ENCODE measurements at regions of chr1 and their contacts with region 1.

Region 1: DNA sequence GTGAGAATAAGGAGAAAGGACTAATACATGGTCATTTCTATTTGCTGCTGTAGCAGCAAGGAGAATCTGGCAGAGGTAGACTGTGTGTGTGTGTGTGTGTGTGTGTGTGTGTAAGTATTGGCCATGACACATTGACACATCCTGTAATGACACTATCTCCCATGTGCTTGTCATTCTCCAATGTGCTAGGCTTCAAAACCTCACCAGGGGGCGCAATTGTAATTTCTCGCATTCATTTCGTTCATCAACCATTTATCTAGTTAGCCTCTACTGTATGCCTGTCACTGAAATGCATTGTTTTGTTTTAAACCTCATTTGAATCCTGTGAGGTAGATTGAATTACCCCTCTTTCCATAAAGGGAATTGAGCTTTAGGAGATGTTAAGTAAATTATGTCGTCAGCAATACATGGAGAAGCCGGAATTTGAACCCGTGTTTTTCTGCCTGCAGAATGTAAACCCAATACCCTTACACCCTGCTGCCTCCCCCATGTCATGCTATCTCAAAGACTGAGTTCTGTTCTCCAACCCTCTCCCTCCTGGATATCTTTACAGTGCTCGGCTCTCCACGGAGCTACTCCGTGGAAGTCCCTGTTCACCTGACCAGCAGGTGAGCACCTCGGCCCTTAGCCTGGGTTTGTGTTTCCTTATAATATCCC is 100.8 kb downstream of the UCK2 start:
- DNase-seq: peak; percentile 39
- ATAC-seq: peak; percentile 55
- H3K4me3 ChIP-seq: no peak overlapping the region
- H3K27ac ChIP-seq: no peak overlapping the region
- H3K4me1 ChIP-seq: no peaks in the 10 kb centered on the region
- H3K27me3 ChIP-seq: no peaks in the 10 kb centered on the region
- CTCF ChIP-seq: peak; percentile 58 to 82 (median 72)
- POLR2A ChIP-seq: no peak
- RAD21 ChIP-seq: peak; percentile 75

Region 2: DNA sequence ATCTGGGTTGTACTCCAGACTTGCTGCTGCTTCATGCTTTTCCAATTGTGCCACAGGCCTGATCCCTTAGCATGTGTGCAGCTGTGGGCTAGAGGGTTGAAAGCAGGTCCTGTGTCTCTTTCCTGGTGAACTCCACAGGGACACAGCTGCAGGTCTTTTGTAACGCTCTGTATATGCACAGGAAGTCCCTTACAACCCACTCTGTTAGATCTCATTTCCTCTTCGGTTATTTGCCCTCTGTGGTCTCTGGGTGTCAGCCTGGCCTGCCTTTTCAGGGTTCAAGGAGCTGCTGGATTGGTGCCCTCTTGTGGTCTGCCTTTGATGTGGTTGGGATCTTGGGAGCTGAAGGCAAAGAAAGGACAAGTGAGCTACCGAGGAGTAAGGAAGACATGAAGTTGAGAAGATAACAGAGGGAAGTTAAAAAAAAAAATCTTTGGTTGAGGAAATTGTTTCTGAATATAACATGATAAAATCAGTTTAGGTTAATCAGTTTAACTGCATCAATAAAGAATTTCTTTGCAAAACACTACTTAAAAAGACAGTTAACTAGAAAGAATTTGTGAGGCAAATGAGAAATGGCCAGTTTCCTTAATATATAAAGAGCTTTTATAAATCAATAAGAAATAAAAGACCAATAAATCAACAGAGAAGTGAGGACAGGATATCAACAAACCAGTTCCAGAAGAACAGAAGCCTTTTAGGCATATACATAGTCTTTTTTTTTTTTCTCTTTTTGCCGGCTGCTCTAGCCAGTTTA is 56.7 kb before region 1 on chr1:
- CTCF ChIA-PET with region 1: no interaction called
- POLR2A ChIA-PET with region 1: no interaction called
- RAD21 ChIA-PET with region 1: no interaction called
- intact Hi-C with region 1: no loop called
- DNase-seq: peak; percentile 79
- ATAC-seq: peak; percentile 85
- H3K4me3 ChIP-seq: no peak overlapping the region
- H3K27ac ChIP-seq: no peak overlapping the region
- H3K4me1 ChIP-seq: peaks cover 11 to 15% of the 10 kb centered on the region in 2 experiments
- H3K27me3 ChIP-seq: no peaks in the 10 kb centered on the region
- CTCF ChIP-seq: peak; percentile 57 to 66 (median 61); a peak in 5 of 6 replicates
- POLR2A ChIP-seq: no peak
- RAD21 ChIP-seq: peak; percentile 63

Region 3: GRCh38 chr1:166166695-166167571 is 238.7 kb after region 1 on chr1 and contains the start of gene FAM78B:
- CTCF ChIA-PET with region 1: no interaction called
- POLR2A ChIA-PET with region 1: no interaction called
- RAD21 ChIA-PET with region 1: no interaction called
- intact Hi-C with region 1: loop called (anchors 10 kb)
- DNase-seq: peak; percentile 42
- ATAC-seq: peak; percentile 83
- H3K4me3 ChIP-seq: peak within 1 kb of the TSS; percentile 41 to 54
- H3K27ac ChIP-seq: peak within 1 kb of the TSS; percentile 32; the same call in 1 of the 2 replicates
- H3K4me1 ChIP-seq: peaks cover 0 to 31% of the 10 kb centered on the region in 2 experiments; a peak in 3 of 4 replicates
- H3K27me3 ChIP-seq: no peaks in the 10 kb centered on the region
- CTCF ChIP-seq: 0 out of 6 replicates have a peak, but pooled peaks of 1 of the 3 experiments have one; percentile 2
- POLR2A ChIP-seq: no peak
- RAD21 ChIP-seq: no peak
- total RNA-seq, gene FAM78B: 1.4 TPM

Region 4: DNA sequence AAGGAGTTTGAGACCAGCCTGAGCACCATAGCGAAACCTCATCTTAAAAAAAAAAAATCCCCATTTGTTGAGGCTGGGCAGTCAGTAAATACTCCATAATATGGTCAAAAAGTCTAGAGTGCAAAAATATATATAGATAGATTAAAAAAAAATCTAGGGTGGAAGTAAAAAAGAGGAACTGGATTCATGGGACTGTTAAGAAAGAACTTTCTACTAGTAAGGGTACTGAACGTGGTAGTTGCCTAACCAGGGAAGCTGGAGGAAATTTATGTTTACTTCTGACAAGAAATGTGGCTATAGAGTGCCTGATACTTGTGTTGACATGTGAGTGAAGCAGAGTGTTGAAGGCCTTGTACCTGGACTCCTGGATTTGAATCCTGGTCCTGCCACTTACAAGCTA is 504.5 kb after region 1 on chr1:
- CTCF ChIA-PET with region 1: interaction called, 7 read pairs
- POLR2A ChIA-PET with region 1: no interaction called
- RAD21 ChIA-PET with region 1: no interaction called
- intact Hi-C with region 1: loop called (anchors 1 kb)
- DNase-seq: no peak
- ATAC-seq: no peak
- H3K4me3 ChIP-seq: no peak overlapping the region
- H3K27ac ChIP-seq: no peak overlapping the region
- H3K4me1 ChIP-seq: no peaks in the 10 kb centered on the region
- H3K27me3 ChIP-seq: no peaks in the 10 kb centered on the region
- CTCF ChIP-seq: no peak
- POLR2A ChIP-seq: no peak
- RAD21 ChIP-seq: no peak

Region 5: DNA sequence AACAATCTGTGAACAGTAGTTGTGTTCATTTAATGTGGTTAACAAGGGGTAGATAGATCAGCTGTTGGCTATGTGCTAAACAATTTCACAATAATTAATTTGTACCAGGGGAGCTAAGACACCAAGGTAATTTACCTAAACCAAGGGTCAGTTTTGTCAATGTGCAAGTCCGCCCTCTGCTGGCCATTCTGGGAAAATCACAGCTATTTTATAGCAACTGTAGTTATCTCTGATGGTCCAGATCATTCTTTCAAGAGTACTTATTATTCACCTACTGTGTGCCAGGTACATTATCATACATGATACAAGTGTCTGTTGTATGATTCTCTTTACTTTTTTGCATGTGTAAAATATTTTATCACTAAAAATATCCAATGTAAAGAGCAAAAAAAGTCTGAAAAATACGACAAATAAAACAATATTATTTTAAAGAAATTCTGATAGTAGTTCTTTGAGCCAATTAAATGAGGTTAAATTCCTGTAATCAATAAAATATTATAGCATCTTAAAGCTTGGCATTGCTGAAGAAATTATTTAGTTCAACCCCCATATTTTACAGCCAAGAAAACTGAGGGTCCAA is 550.9 kb after region 1 on chr1:
- CTCF ChIA-PET with region 1: interaction called, 38 read pairs
- POLR2A ChIA-PET with region 1: no interaction called
- RAD21 ChIA-PET with region 1: interaction called in 1 of 2 experiments, 3 read pairs
- intact Hi-C with region 1: loop called (anchors 1 kb)
- DNase-seq: peak; percentile 21
- ATAC-seq: peak; percentile 67
- H3K4me3 ChIP-seq: no peak overlapping the region
- H3K27ac ChIP-seq: no peak overlapping the region
- H3K4me1 ChIP-seq: no peaks in the 10 kb centered on the region
- H3K27me3 ChIP-seq: peaks cover 18% of the 10 kb centered on the region
- CTCF ChIP-seq: peak; percentile 32 to 86 (median 56); a peak in 5 of 6 replicates
- POLR2A ChIP-seq: no peak
- RAD21 ChIP-seq: peak; percentile 57

Region 6: DNA sequence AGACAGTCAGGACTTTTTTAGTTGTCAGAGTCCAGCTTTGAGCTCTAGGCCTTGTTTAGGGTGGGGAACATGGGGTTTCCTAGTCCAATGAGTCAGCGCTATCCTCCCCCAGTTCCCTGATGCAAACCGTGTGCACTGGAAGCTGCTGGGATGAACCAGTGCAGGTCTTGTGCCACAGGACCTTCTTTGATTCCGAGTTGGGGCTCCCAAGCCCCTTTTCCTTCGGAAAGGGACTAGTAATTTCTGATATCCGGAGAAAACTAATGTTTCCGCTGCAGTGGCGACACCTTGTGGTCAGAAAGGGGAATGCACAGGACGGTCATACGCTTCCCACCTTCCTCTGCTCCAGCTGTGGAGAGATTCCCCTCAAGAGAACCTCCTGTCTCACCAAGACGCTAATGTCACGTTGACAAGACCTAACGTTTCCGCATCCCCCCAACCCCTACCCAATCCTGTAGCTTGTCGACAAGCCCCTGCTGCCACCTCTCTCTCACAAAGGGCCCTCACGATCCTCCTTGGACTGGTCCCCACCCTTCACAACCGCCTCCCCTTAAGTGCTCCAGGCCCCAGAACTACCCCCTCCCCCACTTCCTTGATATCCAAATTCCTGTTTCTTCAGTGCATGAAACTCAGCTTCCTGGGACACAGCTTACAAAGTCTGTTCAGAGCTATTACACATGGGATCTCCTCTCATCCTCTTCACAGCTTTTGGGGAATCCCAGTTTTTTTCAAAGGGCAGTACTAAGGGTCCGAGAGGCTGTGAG is 1131.0 kb after region 1 on chr1:
- CTCF ChIA-PET with region 1: interaction called, 17 read pairs
- POLR2A ChIA-PET with region 1: no interaction called
- RAD21 ChIA-PET with region 1: no interaction called
- intact Hi-C with region 1: loop called (anchors 5 kb)
- DNase-seq: peak; percentile 52
- ATAC-seq: peak; percentile 76
- H3K4me3 ChIP-seq: peak overlapping the region; percentile 31 to 32
- H3K27ac ChIP-seq: peak overlapping the region; percentile 10
- H3K4me1 ChIP-seq: peaks cover 3 to 22% of the 10 kb centered on the region in 2 experiments; a peak in 3 of 4 replicates
- H3K27me3 ChIP-seq: no peaks in the 10 kb centered on the region
- CTCF ChIP-seq: peak; percentile 75 to 95 (median 88); a peak in 5 of 6 replicates
- POLR2A ChIP-seq: no peak
- RAD21 ChIP-seq: peak; percentile 92

Measured in HCT116 (cell line).